PC-3 (cell line): ENCODE measurements at regions of chr5 and their contacts with region 1.

Region 1: GRCh38 chr5:9617221-9617620 is 12.9 kb downstream of the TAS2R1 start:
- DNase-seq: peak; percentile 28
- ATAC-seq: peak; percentile 44
- H3K4me3 ChIP-seq: no peak overlapping the region
- H3K27ac ChIP-seq: peak overlapping the region; percentile 16
- H3K4me1 ChIP-seq: peaks cover 23% of the 10 kb centered on the region
- H3K27me3 ChIP-seq: no peaks in the 10 kb centered on the region
- CTCF ChIP-seq: peak; percentile 36; the same call in 1 of the 2 replicates

Region 2: DNA sequence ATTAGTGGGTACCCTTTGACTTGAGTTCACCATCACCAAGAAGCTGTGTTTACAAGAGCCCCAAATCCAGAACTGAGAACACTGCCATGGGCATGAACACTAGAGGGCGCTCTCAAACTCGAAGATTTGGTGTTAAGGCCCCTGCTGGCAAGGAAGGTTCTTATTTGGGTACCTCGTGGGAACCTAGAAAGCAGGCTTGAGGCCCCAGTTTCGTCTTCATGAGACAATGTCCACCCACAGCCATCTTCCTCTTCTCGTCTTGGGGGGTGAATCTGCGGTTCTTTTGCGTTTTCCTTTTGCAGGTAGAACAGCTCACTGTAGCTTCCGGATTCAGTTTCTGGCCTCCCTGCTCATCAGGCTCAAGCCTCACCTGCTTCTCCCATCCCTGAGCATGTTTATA is 255.4 kb before region 1 on chr5:
- CTCF ChIA-PET with region 1: no interaction called
- POLR2A ChIA-PET with region 1: no interaction called
- intact Hi-C with region 1: loop called (anchors 10 kb)
- DNase-seq: peak; percentile 97
- ATAC-seq: peak; percentile 74
- H3K4me3 ChIP-seq: no peak overlapping the region
- H3K27ac ChIP-seq: no peak overlapping the region
- H3K4me1 ChIP-seq: peaks cover 15% of the 10 kb centered on the region
- H3K27me3 ChIP-seq: no peaks in the 10 kb centered on the region
- CTCF ChIP-seq: peak; percentile 100

Region 3: DNA sequence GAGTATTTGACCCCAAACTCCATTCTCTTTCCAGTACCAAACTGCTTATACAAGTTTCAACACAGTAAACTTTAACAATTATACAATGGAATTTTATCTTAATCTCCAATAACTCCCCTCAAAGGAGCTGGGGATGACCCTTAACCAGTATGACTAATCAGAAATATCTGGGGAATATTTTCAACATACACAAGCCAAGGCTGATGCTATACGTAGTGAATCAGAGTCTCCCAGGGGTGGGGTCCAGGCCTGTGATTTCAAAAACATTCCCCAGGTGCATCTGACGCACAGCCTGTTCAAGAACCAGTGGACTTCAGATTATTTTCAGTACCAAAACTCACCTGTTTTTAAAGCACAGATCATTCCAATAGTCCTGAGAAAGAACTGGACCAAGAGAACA is 59.5 kb before region 1 on chr5:
- CTCF ChIA-PET with region 1: no interaction called
- POLR2A ChIA-PET with region 1: no interaction called
- intact Hi-C with region 1: loop called (anchors 5 kb)
- DNase-seq: peak; percentile 97
- ATAC-seq: peak; percentile 45
- H3K4me3 ChIP-seq: peak overlapping the region; percentile 9; the same call in 1 of the 2 replicates
- H3K27ac ChIP-seq: peak overlapping the region; percentile 79
- H3K4me1 ChIP-seq: peaks cover 62% of the 10 kb centered on the region
- H3K27me3 ChIP-seq: no peaks in the 10 kb centered on the region
- CTCF ChIP-seq: no peak

Region 4: GRCh38 chr5:9829621-9830567 is 212.7 kb after region 1 on chr5:
- CTCF ChIA-PET with region 1: no interaction called
- POLR2A ChIA-PET with region 1: no interaction called
- intact Hi-C with region 1: no loop called
- DNase-seq: peak; percentile 21
- ATAC-seq: no peak
- H3K4me3 ChIP-seq: no peak overlapping the region
- H3K27ac ChIP-seq: no peak overlapping the region
- H3K4me1 ChIP-seq: no peaks in the 10 kb centered on the region
- H3K27me3 ChIP-seq: no peaks in the 10 kb centered on the region
- CTCF ChIP-seq: no peak